Heart right ventricle (tissue), 16 donors: ENCODE measurements at regions of chr4 and their contacts with region 1.

Region 1: GRCh38 chr4:148441986-148442831 is at the start of gene NR3C2:
- DNase-seq: peak; percentile 96 to 100
- ATAC-seq: peak; percentile 89 to 97 (median 95)
- H3K4me3 ChIP-seq: peak within 1 kb of the TSS; percentile 62 to 97 (median 89)
- H3K27ac ChIP-seq: peak within 1 kb of the TSS; percentile 73 to 98 (median 92)
- H3K4me1 ChIP-seq: peaks cover 0 to 55% (median 41%) of the 10 kb centered on the region in 9 donors
- H3K27me3 ChIP-seq: peaks cover 0 to 75% (median 0%) of the 10 kb centered on the region in 7 donors
- CTCF ChIP-seq: no peak
- total RNA-seq, gene NR3C2: 15.4 to 28.6 (median 23.7) TPM

Region 2: DNA sequence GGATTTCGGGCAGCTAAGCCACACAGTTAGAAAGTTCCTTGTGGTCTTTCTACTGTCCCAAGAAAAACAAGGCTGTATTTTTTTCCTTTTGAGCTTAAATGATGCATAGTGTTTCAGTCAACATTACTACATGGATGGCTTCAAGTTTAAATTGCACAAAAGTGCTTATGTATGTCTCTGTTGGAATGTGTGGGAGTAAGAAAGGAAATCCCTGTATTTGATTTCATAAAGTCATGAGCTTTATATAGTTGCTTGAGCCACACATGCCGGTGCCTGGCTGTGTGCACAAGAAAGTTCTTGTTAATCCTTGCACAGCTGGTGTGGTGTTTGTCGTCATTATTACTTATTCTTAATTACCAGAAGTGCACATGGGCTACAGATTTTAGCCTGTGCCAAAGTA is 448.1 kb before region 1 on chr4:
- intact Hi-C with region 1: loop called in 1 of 10 experiments (anchors 10 kb)
- DNase-seq: no peak
- ATAC-seq: peak in 2 of 8 donors; percentile 14 to 48
- H3K4me3 ChIP-seq: no peak overlapping the region
- H3K27ac ChIP-seq: peak overlapping the region in 3 of 10 donors; percentile 7 to 65 (median 26)
- H3K4me1 ChIP-seq: peaks cover 0 to 61% (median 33%) of the 10 kb centered on the region in 9 donors
- H3K27me3 ChIP-seq: no peaks in the 10 kb centered on the region
- CTCF ChIP-seq: no peak

Region 3: DNA sequence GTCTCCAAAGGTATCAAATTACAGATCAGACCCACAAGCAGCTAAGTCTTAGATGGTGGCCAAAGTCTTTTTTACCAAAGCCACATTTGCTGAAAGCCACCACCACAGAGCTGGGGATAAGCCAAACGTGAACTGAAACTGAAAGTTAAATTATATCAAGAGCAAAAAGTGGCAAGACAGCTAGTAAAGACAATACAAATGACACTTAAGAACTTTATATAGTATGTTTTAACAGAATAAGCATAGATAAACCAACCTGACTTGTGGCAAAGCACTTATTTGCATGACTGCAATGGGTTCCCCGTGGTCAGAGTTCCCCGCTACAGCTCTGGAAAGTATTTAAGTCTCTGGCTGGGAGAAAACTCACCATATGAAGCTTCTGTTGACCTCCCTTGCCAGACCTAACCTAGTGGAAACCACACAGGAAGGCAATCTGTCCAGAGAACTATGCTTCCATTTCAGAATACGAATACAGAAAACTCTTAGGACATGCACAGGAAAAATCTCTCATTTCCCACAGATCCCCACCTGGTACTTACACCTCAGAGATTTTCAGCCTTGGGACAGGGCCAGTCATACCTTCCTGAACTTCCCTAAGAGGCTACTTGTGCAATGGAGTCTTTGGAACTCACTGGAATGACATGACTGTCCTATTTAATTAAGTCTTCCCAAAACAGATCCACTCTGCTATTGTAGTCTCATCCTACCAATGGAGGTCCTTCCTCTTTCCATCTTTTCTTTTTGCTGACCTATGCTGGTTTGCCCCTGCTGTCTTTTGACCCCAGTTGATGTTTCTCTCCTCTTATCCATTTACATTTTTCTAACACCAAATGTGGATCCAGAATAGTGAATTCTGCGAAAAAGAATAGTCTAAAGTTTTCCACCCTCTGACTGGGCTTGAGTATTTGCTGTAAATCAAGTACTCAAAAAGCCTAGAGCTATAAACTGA is 225.1 kb before region 1 on chr4:
- intact Hi-C with region 1: loop called in 3 of 10 experiments (anchors 10 kb)
- DNase-seq: no peak
- ATAC-seq: peak in 4 of 8 donors; percentile 24 to 36 (median 29)
- H3K4me3 ChIP-seq: peak overlapping the region in 8 of 10 donors; percentile 12 to 44 (median 34)
- H3K27ac ChIP-seq: peak overlapping the region in 7 of 10 donors; percentile 20 to 61 (median 58)
- H3K4me1 ChIP-seq: peaks cover 0 to 47% (median 27%) of the 10 kb centered on the region in 9 donors
- H3K27me3 ChIP-seq: no peaks in the 10 kb centered on the region
- CTCF ChIP-seq: no peak

Region 4: GRCh38 chr4:148288448-148288847 is 153.8 kb before region 1 on chr4:
- intact Hi-C with region 1: loop called in 5 of 10 experiments (anchors 5 to 10 kb)
- DNase-seq: peak; percentile 38 to 60
- ATAC-seq: peak in 7 of 8 donors; percentile 36 to 90 (median 66)
- H3K4me3 ChIP-seq: no peak overlapping the region
- H3K27ac ChIP-seq: peak overlapping the region in 1 of 10 donors; percentile 32
- H3K4me1 ChIP-seq: peaks cover 0 to 65% (median 46%) of the 10 kb centered on the region in 9 donors
- H3K27me3 ChIP-seq: no peaks in the 10 kb centered on the region
- CTCF ChIP-seq: no peak

Region 5: GRCh38 chr4:148344352-148344751 is 97.9 kb before region 1 on chr4:
- intact Hi-C with region 1: loop called in 2 of 10 experiments (anchors 5 to 10 kb)
- DNase-seq: peak; percentile 14 to 43
- ATAC-seq: peak in 3 of 8 donors; percentile 52 to 63 (median 55)
- H3K4me3 ChIP-seq: no peak overlapping the region
- H3K27ac ChIP-seq: no peak overlapping the region
- H3K4me1 ChIP-seq: peaks cover 0 to 49% (median 19%) of the 10 kb centered on the region in 9 donors
- H3K27me3 ChIP-seq: no peaks in the 10 kb centered on the region
- CTCF ChIP-seq: no peak

Region 6: DNA sequence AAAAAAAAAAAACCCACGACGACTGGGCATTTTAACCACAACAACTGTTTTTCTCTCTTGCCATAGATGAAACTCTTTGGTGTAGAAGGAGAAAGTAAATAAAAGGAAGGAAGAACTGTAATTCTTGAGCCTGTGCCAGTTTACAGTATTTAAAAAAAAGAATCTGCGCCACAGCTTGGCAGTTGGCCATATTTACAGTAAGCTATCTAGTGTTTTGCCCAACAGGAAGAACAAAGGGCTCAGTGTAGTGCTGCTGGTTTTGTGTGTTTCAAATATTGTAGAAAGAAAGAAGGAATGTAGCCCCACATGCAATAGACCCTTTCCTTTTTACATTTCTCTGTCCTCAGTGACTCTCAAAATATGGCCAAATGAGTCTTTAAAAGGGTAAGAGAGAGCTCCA is 66.1 kb before region 1 on chr4:
- intact Hi-C with region 1: loop called in 3 of 10 experiments (anchors 5 to 10 kb)
- DNase-seq: peak in 1 of 2 donors; percentile 59
- ATAC-seq: peak; percentile 26 to 85 (median 72)
- H3K4me3 ChIP-seq: peak overlapping the region in 9 of 10 donors; percentile 6 to 43 (median 40)
- H3K27ac ChIP-seq: peak overlapping the region in 7 of 10 donors; percentile 9 to 64 (median 31)
- H3K4me1 ChIP-seq: peaks cover 0 to 44% (median 24%) of the 10 kb centered on the region in 9 donors
- H3K27me3 ChIP-seq: no peaks in the 10 kb centered on the region
- CTCF ChIP-seq: no peak

Region 7: GRCh38 chr4:149031399-149031798 is 589.2 kb after region 1 on chr4:
- intact Hi-C with region 1: loop called in 1 of 10 experiments (anchors 10 kb)
- DNase-seq: no peak
- ATAC-seq: peak in 2 of 8 donors; percentile 38 to 57
- H3K4me3 ChIP-seq: no peak overlapping the region
- H3K27ac ChIP-seq: no peak overlapping the region
- H3K4me1 ChIP-seq: no peaks in the 10 kb centered on the region
- H3K27me3 ChIP-seq: no peaks in the 10 kb centered on the region
- CTCF ChIP-seq: peak in 8 of 9 donors; percentile 22 to 61 (median 46)